Calu3 (cell line): ENCODE measurements at regions of chr17 and their contacts with region 1.

Region 1: DNA sequence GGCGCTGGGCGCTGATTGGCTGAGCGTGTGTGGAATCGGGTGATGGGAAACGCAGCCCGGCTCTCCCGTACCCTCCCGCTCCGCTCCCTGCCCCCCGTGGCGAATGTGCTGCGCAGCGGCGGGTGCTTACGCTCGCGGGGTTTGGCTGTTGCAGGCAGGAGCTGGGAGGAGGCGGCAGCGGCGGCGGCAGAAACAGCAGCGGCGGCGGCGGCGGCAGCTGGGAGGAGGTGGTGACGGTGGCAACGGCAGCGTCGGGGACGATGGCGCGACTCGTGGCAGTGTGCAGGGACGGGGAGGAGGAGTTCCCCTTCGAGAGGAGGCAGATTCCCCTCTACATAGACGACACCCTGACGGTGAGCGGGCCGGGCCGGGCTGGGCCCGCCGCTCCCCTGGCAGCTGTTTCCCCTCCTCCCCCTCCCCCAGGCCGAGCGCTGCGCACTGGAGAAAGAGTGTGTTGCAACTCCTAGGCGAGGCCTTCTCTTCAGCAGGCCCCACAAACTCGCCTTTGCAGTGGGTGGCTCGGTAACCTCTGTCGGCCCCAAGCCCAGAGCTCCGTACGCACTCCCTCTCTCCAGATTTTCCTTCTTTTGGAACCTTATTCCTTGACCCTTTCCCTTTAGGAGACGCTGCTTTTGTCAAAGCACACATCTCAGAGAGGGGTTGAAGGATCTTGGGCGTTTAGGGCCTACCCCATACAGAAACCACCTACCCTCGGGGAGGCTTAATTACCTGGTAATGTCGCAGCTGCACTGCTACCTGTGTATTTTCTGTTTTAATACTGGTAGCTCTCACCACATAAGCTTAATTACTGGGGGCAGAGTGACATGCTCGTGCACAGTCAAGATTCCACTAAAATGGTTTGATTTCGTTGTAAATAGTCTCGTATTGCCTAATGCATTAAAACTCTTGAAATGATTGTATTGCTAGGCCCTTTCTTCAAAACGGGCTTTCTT is 1.0 kb downstream of the GGNBP2 start:
- DNase-seq: peak; percentile 100
- H3K4me3 Mint-ChIP-seq: peak overlapping the region; percentile 97
- H3K27ac Mint-ChIP-seq: peak overlapping the region; percentile 95
- H3K4me1 Mint-ChIP-seq: peaks cover 32% of the 10 kb centered on the region
- H3K27me3 Mint-ChIP-seq: no peaks in the 10 kb centered on the region
- CTCF ChIP-seq: peak; percentile 31

Region 2: DNA sequence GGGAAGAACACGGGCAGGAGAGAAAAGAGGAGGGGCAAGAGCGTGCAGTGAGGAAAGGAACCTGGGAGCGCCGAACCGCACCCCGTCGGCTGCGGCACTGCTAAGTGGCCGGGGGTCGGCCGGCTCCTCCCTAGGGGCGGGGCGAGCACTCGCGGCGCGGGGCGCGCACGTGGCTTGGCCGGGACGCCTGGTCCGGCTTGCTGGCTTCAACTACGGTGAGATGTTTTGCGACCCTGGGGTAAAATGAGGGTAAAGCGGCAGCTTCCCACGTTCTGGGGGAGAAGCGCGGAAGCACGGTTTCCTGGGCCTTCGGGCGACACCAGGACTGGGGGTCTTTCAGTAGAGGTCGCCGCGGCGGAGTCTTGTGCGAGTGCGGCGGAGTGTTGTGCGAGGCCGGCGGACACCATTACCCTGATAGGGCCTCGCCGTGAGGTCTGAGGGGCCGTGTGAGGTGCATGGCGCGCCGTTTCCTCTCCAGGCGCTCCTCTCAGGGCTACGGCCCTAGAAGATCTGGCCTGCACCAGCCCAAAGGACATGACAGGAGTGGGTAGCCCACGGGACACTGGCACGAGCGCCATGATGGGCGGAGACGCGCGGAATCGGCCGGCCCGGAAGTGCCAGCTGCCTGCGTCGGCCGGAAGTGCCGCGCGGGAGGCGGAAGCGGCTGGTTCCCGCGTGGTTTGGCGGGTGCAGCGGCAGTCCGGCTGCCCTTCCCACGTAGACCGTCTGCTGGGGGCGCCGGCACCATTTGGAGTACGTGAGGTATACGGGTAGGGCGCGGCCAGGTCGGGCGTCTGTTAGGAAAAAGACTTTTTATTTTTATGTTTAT is 10.7 kb before region 1 on chr17 and contains the starts of genes MYO19 and PIGW:
- CTCF ChIA-PET with region 1: interaction called, 58 read pairs
- intact Hi-C with region 1: loop called (anchors 1 kb)
- DNase-seq: peak; percentile 100
- H3K4me3 Mint-ChIP-seq: peak within 1 kb of the TSS; percentile 99
- H3K27ac Mint-ChIP-seq: peak within 1 kb of the TSS; percentile 93
- H3K4me1 Mint-ChIP-seq: peaks cover 23% of the 10 kb centered on the region
- H3K27me3 Mint-ChIP-seq: no peaks in the 10 kb centered on the region
- CTCF ChIP-seq: peak; percentile 62
- total RNA-seq, gene MYO19: 155 and 156 TPM in 2 replicates
- total RNA-seq, gene PIGW: 71.1 and 78.9 TPM in 2 replicates

Region 3: DNA sequence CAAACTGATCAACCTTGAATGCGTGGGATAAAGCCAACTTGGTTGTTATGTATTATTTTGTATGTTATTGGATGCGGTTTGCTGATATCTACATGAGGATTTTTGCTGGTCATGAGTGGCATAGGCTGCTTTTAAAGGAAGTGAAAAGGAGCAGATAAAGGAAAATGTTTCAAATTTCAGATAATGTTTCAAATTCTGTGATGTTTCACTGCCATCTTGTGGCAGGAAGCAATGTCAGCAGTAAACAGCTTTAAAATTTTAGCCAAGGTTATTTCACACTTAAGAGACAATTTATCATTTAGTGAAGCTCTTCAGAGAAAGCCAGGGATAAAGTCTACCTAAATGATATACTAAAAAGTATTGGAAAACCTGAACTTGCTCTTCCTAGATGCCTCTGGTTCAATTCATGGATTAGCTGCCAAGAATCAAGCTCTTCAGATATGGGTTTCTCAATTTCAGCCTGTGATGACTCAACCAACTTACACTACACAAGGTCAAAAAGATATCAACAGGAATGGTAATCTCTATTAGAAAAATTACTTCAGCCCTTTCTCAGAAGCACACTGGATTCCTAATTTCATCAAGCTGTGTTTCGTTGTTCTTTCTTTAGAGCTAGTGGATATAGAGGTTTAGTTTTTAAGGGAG is 694.1 kb after region 1 on chr17:
- CTCF ChIA-PET with region 1: no interaction called
- intact Hi-C with region 1: loop called (anchors 5 kb)
- DNase-seq: no peak
- H3K4me3 Mint-ChIP-seq: no peak overlapping the region
- H3K27ac Mint-ChIP-seq: no peak overlapping the region
- H3K4me1 Mint-ChIP-seq: peaks cover 11% of the 10 kb centered on the region
- H3K27me3 Mint-ChIP-seq: no peaks in the 10 kb centered on the region
- CTCF ChIP-seq: peak; percentile 94